Breast epithelium (tissue), 4 donors: ENCODE measurements at regions of chr1 and their contacts with region 1.

Region 1: GRCh38 chr1:211654838-211655787 is 20.3 kb downstream of the NEK2 start:
- DNase-seq: peak; percentile 79 to 87
- H3K4me3 ChIP-seq: peak overlapping the region in 1 of 3 donors; percentile 42
- H3K27ac ChIP-seq: no peak overlapping the region
- H3K4me1 ChIP-seq: no peaks in the 10 kb centered on the region
- H3K27me3 ChIP-seq: no peaks in the 10 kb centered on the region
- CTCF ChIP-seq: peak; percentile 82 to 95 (median 91)
- POLR2A ChIP-seq: no peak

Region 2: DNA sequence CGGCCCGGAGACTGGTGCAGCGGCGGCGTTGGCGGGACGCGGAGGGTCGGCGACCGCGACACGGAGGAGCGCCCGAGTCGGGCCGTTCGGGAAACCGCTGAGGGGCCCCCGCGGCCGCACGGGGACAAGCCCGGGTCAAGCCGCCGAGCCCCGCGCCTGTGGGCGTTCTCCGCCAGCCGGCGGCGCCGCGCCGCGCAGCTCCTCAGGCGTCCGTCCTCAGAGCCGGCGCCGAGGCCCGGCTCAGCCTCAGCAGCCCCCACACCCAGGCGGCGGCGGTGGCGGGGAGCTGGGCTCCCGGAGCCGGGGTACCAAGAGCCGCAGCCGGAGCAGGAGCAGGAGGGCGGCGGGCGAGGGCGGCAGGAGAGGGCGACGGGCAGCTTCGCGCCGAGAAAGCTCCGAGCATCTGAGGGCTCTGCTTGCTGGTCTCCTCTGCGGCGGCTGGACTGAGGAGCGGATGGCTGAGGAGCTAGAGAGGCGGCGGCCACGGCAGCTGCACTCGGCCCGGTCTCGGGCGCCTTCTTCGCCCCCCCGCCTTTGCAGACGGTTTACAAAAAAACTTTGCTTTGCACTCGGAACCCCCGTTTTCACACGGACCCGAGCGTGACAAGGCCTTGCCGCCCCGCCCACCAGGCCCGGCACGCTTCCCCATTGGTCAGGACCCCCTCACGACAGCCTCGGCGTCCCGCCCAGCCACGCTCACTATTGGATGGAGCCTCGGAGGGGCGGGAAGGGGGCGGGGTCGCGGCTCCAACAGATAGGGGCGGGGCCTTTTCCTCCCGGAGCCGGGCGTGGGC is 76.3 kb before region 1 on chr1 and contains the start of gene SLC30A1:
- intact Hi-C with region 1: loop called (anchors 10 kb)
- DNase-seq: peak; percentile 99 to 100
- H3K4me3 ChIP-seq: peak within 1 kb of the TSS; percentile 91 to 93 (median 92)
- H3K27ac ChIP-seq: peak within 1 kb of the TSS; percentile 87 to 97
- H3K4me1 ChIP-seq: no peaks in the 10 kb centered on the region
- H3K27me3 ChIP-seq: no peaks in the 10 kb centered on the region
- CTCF ChIP-seq: no peak
- POLR2A ChIP-seq: peak; percentile 58
- total RNA-seq, gene SLC30A1: 16.1 to 21.2 (median 16.3) TPM